B cell (primary cell): ENCODE measurements at regions of chr11 and their contacts with region 1.

Region 1: GRCh38 chr11:1852877-1853276 is at the start of gene LSP1:
- DNase-seq: peak; percentile 95
- ATAC-seq: peak; percentile 60
- H3K4me3 ChIP-seq: peak within 1 kb of the TSS; percentile 57 to 97 (median 95)
- H3K4me3 Mint-ChIP-seq: peak within 1 kb of the TSS; percentile 100
- H3K27ac ChIP-seq: peak within 1 kb of the TSS; percentile 94 to 99
- H3K27ac Mint-ChIP-seq: peak within 1 kb of the TSS; percentile 91
- H3K4me1 ChIP-seq: peaks cover 74 to 90% of the 10 kb centered on the region in 2 donors
- H3K4me1 Mint-ChIP-seq: peaks cover 72% of the 10 kb centered on the region
- H3K27me3 ChIP-seq: no peaks in the 10 kb centered on the region
- H3K27me3 Mint-ChIP-seq: no peaks in the 10 kb centered on the region
- CTCF ChIP-seq: no peak
- total RNA-seq, gene LSP1: 445 and 446 TPM in 2 replicates

Region 2: GRCh38 chr11:1486114-1486825 is 366.6 kb before region 1 on chr11 and contains the start of gene MOB2:
- CTCF ChIA-PET with region 1: no interaction called
- POLR2A ChIA-PET with region 1: no interaction called
- intact Hi-C with region 1: no loop called
- DNase-seq: peak; percentile 41
- ATAC-seq: peak; percentile 39
- H3K4me3 ChIP-seq: no peak within 1 kb of the TSS
- H3K4me3 Mint-ChIP-seq: peak within 1 kb of the TSS; percentile 59
- H3K27ac ChIP-seq: peak within 1 kb of the TSS in 1 of 2 donors; percentile 27
- H3K27ac Mint-ChIP-seq: peak within 1 kb of the TSS; percentile 50
- H3K4me1 ChIP-seq: peaks cover 21 to 45% of the 10 kb centered on the region in 2 donors
- H3K4me1 Mint-ChIP-seq: peaks cover 41% of the 10 kb centered on the region
- H3K27me3 ChIP-seq: no peaks in the 10 kb centered on the region
- H3K27me3 Mint-ChIP-seq: no peaks in the 10 kb centered on the region
- CTCF ChIP-seq: no peak
- total RNA-seq, gene MOB2: 55.7 and 63.4 TPM in 2 replicates

Region 3: DNA sequence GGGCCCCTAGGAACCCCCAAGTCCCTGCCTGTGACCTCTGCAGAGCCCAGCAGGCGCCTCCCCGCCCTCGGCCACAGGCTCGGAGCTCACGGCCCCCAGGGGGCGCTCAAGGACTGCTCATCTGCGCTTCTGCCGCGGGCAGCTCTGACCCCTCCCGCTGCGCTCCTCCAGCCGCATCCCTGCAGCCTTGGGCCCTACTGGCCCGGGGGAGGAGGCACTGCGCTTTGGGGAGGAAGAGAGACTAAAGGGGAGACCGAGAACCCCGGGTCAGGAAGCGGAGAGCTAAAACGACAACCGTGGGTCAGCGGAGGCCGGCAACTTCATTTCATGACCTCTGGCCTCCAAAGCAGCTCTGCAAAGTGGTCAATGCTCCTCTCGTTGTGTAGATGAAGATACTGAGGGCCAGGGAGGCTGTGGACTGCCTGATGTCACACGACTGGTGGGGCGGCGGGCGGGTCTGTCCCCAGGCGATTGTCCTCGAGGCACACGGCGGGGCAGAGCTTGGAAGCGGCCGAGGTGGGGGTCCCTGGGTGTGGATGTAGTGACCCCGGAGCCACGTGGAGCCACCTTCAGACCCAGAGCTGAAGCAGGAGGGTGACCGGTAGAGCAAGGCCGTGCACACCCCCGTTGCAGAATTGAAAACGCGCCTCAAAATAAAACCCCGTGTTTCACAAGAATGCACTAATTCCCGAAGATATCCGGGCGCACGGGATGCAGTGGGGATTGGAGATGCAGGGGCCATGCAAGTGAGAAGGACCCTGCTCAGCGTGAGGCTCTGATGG is 158.6 kb before region 1 on chr11:
- CTCF ChIA-PET with region 1: interaction called, 11 read pairs
- POLR2A ChIA-PET with region 1: no interaction called
- intact Hi-C with region 1: no loop called
- DNase-seq: peak; percentile 85
- ATAC-seq: peak; percentile 84
- H3K4me3 ChIP-seq: peak overlapping the region in 1 of 5 experiments; percentile 19
- H3K4me3 Mint-ChIP-seq: no peak overlapping the region
- H3K27ac ChIP-seq: no peak overlapping the region
- H3K27ac Mint-ChIP-seq: no peak overlapping the region
- H3K4me1 ChIP-seq: peaks cover 8 to 14% of the 10 kb centered on the region in 2 donors
- H3K4me1 Mint-ChIP-seq: peaks cover 5% of the 10 kb centered on the region
- H3K27me3 ChIP-seq: peaks cover 0 to 43% (median 6%) of the 10 kb centered on the region in 4 experiments
- H3K27me3 Mint-ChIP-seq: peaks cover 44% of the 10 kb centered on the region
- CTCF ChIP-seq: peak; percentile 70

Region 4: DNA sequence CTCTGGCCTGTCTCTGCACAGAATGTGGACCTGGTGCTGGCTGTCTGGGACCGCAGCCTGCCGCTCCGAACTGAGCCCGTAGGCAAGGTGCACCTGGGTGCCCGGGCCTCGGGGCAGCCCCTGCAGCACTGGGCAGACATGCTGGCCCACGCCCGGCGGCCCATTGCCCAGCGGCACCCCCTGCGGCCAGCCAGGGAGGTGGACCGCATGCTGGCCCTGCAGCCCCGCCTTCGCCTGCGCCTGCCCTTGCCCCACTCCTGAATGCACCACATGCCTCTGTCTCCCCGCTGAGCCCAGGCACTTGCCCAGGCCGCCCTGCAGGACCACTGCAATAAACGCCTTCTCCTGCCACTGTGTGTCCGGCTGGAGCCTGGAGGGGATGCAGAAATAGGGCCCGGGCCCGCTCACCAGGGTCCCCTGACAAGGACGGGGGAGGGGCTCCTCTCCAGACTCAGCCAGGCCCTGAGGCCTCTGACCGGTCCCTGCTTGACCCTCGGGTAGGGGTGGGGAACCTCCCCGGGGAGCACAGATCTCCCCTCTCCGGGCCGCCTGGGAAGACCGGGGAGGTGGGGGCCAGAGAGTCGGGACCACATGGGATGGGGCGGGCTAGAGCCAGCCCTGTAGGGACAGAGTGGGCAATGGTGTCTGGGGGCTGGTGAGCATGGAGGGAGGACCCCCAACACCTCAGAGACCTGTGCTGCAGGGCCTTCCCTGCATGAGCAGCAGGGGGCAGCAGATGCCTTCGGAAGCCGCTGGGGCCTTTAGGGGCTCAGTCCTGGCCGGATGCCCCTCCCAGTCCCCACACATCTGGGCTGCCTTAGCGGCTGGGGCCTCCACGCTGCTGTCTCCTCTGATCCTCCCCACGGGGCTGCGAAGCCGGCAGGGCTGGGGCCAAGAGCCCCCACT is 15.5 kb before region 1 on chr11:
- CTCF ChIA-PET with region 1: interaction called, 30 read pairs
- POLR2A ChIA-PET with region 1: interaction called, 28 read pairs
- intact Hi-C with region 1: loop called (anchors 1 kb)
- DNase-seq: peak; percentile 88
- ATAC-seq: peak; percentile 75
- H3K4me3 ChIP-seq: peak overlapping the region in 1 of 5 experiments; percentile 5
- H3K4me3 Mint-ChIP-seq: peak overlapping the region; percentile 56
- H3K27ac ChIP-seq: peak overlapping the region; percentile 22 to 68
- H3K27ac Mint-ChIP-seq: peak overlapping the region; percentile 78
- H3K4me1 ChIP-seq: peaks cover 41 to 51% of the 10 kb centered on the region in 2 donors
- H3K4me1 Mint-ChIP-seq: peaks cover 26% of the 10 kb centered on the region
- H3K27me3 ChIP-seq: peaks cover 0 to 19% (median 5%) of the 10 kb centered on the region in 4 experiments
- H3K27me3 Mint-ChIP-seq: no peaks in the 10 kb centered on the region
- CTCF ChIP-seq: peak; percentile 90

Region 5: GRCh38 chr11:1917671-1918516 is 65.0 kb after region 1 on chr11:
- CTCF ChIA-PET with region 1: interaction called, 3 read pairs
- POLR2A ChIA-PET with region 1: interaction called, 5 read pairs
- intact Hi-C with region 1: loop called (anchors 5 kb)
- DNase-seq: peak; percentile 31
- ATAC-seq: peak; percentile 40
- H3K4me3 ChIP-seq: no peak overlapping the region
- H3K4me3 Mint-ChIP-seq: no peak overlapping the region
- H3K27ac ChIP-seq: no peak overlapping the region
- H3K27ac Mint-ChIP-seq: no peak overlapping the region
- H3K4me1 ChIP-seq: peaks cover 0 to 5% of the 10 kb centered on the region in 2 donors
- H3K4me1 Mint-ChIP-seq: peaks cover 19% of the 10 kb centered on the region
- H3K27me3 ChIP-seq: peaks cover 0 to 13% (median 6%) of the 10 kb centered on the region in 4 experiments
- H3K27me3 Mint-ChIP-seq: peaks cover 21% of the 10 kb centered on the region
- CTCF ChIP-seq: peak; percentile 48

Region 6: DNA sequence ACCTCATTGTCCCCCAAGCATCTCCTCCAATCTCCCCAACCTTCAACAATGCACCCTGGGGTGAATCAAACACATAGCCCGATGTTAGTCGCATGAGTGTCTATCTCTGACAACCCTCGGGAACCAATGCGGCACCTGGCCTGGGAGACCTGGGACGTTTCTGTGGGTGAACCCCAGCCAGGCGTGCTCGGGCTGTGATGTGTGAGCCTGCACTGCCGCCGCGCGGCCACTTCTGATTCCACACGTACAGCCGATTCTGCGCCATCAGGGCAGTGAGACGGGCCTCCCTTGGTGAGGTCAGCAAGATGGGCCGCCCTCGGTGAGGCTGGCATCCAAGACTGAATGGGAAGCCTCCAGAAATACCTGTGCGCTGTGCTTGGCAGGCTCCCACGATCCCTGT is 149.9 kb after region 1 on chr11:
- CTCF ChIA-PET with region 1: interaction called, 18 read pairs
- POLR2A ChIA-PET with region 1: interaction called, 3 read pairs
- intact Hi-C with region 1: no loop called
- DNase-seq: no peak
- ATAC-seq: peak; percentile 46
- H3K4me3 ChIP-seq: no peak overlapping the region
- H3K4me3 Mint-ChIP-seq: no peak overlapping the region
- H3K27ac ChIP-seq: no peak overlapping the region
- H3K27ac Mint-ChIP-seq: no peak overlapping the region
- H3K4me1 ChIP-seq: no peaks in the 10 kb centered on the region
- H3K4me1 Mint-ChIP-seq: no peaks in the 10 kb centered on the region
- H3K27me3 ChIP-seq: no peaks in the 10 kb centered on the region
- H3K27me3 Mint-ChIP-seq: no peaks in the 10 kb centered on the region
- CTCF ChIP-seq: no peak

Region 7: DNA sequence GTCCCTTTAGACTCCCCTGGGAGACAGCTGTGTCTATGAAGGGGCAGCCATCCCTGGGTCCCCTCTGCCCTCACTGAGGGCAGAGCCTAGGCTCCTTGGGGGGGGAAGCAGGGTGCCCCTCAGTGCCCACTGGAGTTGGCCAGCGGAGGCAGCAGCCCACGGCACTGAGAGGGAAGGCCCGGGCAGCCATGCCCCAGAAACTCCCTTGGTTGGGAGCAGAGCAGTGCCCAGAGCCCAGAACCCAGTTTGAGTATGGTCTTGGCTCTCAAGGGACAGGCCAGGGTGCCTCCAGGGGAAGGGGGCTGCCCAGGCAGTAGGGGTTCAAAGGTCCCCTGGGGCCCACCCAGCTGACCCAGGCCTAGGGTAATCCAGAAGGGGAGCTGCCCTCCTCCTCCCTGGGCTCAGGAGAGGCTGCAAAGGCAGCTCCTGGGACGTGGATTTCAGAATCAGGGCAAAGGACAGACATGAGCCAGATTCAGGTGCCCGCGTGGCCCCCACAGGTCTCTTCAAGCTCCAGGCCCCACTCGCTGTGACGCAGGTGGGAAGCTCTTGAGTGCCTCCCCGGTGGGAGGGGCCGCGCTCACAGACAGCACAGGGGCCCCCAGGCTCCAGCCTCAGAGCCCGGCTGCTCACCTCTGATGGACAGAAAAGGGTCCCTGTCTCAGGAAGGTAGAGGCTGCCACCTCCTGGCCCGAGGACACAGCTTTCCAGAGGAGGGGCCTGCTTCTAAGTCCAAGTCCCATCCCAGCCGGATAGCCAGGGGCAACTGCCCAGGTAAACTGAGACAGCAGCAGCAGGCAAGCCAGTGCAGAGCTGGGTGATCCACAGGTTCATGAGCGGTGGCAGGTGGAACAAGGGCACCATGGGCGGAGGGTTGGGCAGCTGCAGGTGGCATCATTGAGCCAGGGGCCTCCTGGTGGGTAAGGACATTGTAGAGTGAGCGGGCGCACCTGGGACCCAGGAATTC is 446.2 kb after region 1 on chr11:
- CTCF ChIA-PET with region 1: no interaction called
- POLR2A ChIA-PET with region 1: interaction called, 12 read pairs
- intact Hi-C with region 1: no loop called
- DNase-seq: peak; percentile 52
- ATAC-seq: no peak
- H3K4me3 ChIP-seq: peak overlapping the region in 2 of 5 experiments; percentile 21 to 44
- H3K4me3 Mint-ChIP-seq: peak overlapping the region; percentile 50
- H3K27ac ChIP-seq: peak overlapping the region in 1 of 2 donors; percentile 37
- H3K27ac Mint-ChIP-seq: peak overlapping the region; percentile 88
- H3K4me1 ChIP-seq: peaks cover 51 to 57% of the 10 kb centered on the region in 2 donors
- H3K4me1 Mint-ChIP-seq: peaks cover 58% of the 10 kb centered on the region
- H3K27me3 ChIP-seq: no peaks in the 10 kb centered on the region
- H3K27me3 Mint-ChIP-seq: no peaks in the 10 kb centered on the region
- CTCF ChIP-seq: no peak

Region 8: GRCh38 chr11:2400069-2400760 is 547.3 kb after region 1 on chr11 and contains the start of gene TSSC4:
- CTCF ChIA-PET with region 1: no interaction called
- POLR2A ChIA-PET with region 1: no interaction called
- intact Hi-C with region 1: loop called (anchors 5 kb)
- DNase-seq: peak; percentile 100
- ATAC-seq: peak; percentile 81
- H3K4me3 ChIP-seq: peak within 1 kb of the TSS; percentile 87 to 100 (median 95)
- H3K4me3 Mint-ChIP-seq: peak within 1 kb of the TSS; percentile 90
- H3K27ac ChIP-seq: peak within 1 kb of the TSS; percentile 91 to 93
- H3K27ac Mint-ChIP-seq: peak within 1 kb of the TSS; percentile 98
- H3K4me1 ChIP-seq: peaks cover 26 to 40% of the 10 kb centered on the region in 2 donors
- H3K4me1 Mint-ChIP-seq: peaks cover 25% of the 10 kb centered on the region
- H3K27me3 ChIP-seq: no peaks in the 10 kb centered on the region
- H3K27me3 Mint-ChIP-seq: no peaks in the 10 kb centered on the region
- CTCF ChIP-seq: peak; percentile 94
- total RNA-seq, gene TSSC4: 57.5 and 59.5 TPM in 2 replicates